Activated T-helper 1 cell treated with anti-CD3 and anti-CD28 coated beads, Interleukin-12 subunit alpha, Interleukin-12 subunit beta, Interleukin-2, Interleukin-4 antibody, amounts not matched to agents 30 ng/mL and 10 ng/mL and 1 ng/mL, durations not matched to agents 14 hours and 24 hours and 36 hours (primary cell): ENCODE measurements at regions of chrX and their contacts with region 1.

Region 1: GRCh38 chrX:47193475-47194193 is at the start of gene UBA1:
- DNase-seq: peak; percentile 87
- H3K4me3 Mint-ChIP-seq: peak within 1 kb of the TSS; percentile 96
- H3K27ac Mint-ChIP-seq: peak within 1 kb of the TSS; percentile 98
- H3K4me1 Mint-ChIP-seq: peaks cover 59% of the 10 kb centered on the region
- H3K27me3 Mint-ChIP-seq: no peaks in the 10 kb centered on the region
- total RNA-seq, gene UBA1: 221 and 223 TPM in 2 replicates

Region 2: DNA sequence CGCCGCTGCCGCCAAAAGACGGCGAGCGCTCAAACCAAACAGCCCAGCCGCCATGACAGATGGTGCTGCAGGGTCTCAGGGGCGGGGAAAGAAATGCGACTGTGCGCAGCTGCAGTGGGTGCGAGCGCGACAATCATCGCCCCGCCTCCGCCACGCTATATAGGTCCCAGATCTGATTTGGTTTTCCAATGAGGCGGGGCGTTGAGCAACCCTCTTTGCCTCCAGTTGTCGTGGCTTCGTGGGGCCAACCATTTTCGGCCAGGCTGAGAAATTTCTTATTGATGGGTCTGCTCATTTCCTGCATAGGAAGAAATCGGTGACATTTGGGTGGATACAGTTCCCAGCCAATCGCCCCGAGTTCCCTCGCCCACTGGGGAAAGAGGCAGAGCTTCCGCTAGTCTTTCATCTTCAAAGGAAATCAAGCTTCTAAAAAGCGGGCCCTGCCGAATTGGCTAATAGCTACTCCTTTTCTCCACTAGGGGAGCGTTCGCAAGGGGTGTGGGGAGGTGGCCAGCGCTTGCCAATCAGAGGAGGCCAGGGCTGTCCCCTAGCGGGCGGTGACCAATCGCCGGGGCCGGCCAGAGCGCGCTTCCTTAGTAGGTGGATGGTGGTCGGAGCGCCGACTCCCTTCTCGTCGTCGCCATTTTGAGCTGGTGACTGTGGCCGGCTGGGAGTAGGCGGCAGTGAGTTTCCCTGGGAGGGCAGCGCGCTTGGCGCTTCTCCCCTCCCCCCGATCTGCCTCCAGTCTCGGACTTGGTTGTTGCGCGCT is 48.8 kb before region 1 on chrX and contains the starts of genes NDUFB11 and RBM10:
- intact Hi-C with region 1: loop called (anchors 1 kb)
- DNase-seq: peak; percentile 89
- H3K4me3 Mint-ChIP-seq: peak within 1 kb of the TSS; percentile 100
- H3K27ac Mint-ChIP-seq: peak within 1 kb of the TSS; percentile 100
- H3K4me1 Mint-ChIP-seq: peaks cover 18% of the 10 kb centered on the region
- H3K27me3 Mint-ChIP-seq: peaks cover 2% of the 10 kb centered on the region
- total RNA-seq, gene NDUFB11: 84.5 and 88.7 TPM in 2 replicates
- total RNA-seq, gene RBM10: 62.0 and 64.1 TPM in 2 replicates

Region 3: DNA sequence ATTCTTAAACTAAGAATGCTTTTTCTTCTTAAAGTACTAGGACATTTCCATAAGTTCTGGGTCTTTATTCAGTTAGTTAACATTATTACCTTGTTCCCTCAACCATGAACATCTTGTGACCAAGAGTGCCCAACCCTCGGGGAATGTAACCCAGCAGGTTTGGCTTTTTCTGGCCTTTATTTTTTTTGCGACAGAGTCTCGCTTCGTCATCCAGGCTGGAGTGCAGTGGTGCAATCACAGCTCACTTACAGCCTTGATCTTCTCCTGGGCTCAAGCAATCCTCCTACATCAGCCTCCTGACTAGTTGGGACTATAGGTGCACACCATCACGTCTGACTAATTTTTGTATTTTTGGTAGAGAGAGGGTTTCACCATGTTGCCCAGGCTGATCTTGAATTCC is 104.2 kb after region 1 on chrX:
- intact Hi-C with region 1: no loop called
- DNase-seq: no peak
- H3K4me3 Mint-ChIP-seq: no peak overlapping the region
- H3K27ac Mint-ChIP-seq: no peak overlapping the region
- H3K4me1 Mint-ChIP-seq: no peaks in the 10 kb centered on the region
- H3K27me3 Mint-ChIP-seq: no peaks in the 10 kb centered on the region

Region 4: GRCh38 chrX:47311932-47312774 is 118.5 kb after region 1 on chrX:
- intact Hi-C with region 1: loop called (anchors 1 kb)
- DNase-seq: peak; percentile 1
- H3K4me3 Mint-ChIP-seq: no peak overlapping the region
- H3K27ac Mint-ChIP-seq: no peak overlapping the region
- H3K4me1 Mint-ChIP-seq: no peaks in the 10 kb centered on the region
- H3K27me3 Mint-ChIP-seq: no peaks in the 10 kb centered on the region

Region 5: GRCh38 chrX:47482512-47483309 is 289.1 kb after region 1 on chrX and contains the start of gene ZNF41:
- intact Hi-C with region 1: loop called (anchors 1 kb)
- DNase-seq: peak; percentile 63
- H3K4me3 Mint-ChIP-seq: peak within 1 kb of the TSS; percentile 92
- H3K27ac Mint-ChIP-seq: peak within 1 kb of the TSS; percentile 91
- H3K4me1 Mint-ChIP-seq: peaks cover 26% of the 10 kb centered on the region
- H3K27me3 Mint-ChIP-seq: no peaks in the 10 kb centered on the region
- total RNA-seq, gene ZNF41: 10.7 and 10.9 TPM in 2 replicates

Region 6: GRCh38 chrX:47650164-47651042 is 456.8 kb after region 1 on chrX and contains the start of gene ELK1:
- intact Hi-C with region 1: loop called (anchors 1 kb)
- DNase-seq: peak; percentile 85
- H3K4me3 Mint-ChIP-seq: peak within 1 kb of the TSS; percentile 95
- H3K27ac Mint-ChIP-seq: peak within 1 kb of the TSS; percentile 96
- H3K4me1 Mint-ChIP-seq: peaks cover 66% of the 10 kb centered on the region
- H3K27me3 Mint-ChIP-seq: no peaks in the 10 kb centered on the region
- total RNA-seq, gene ELK1: 99.3 TPM in 2 replicates

Region 7: GRCh38 chrX:48021026-48021900 is 827.6 kb after region 1 on chrX:
- intact Hi-C with region 1: loop called (anchors 10 kb)
- DNase-seq: peak; percentile 54
- H3K4me3 Mint-ChIP-seq: peak overlapping the region; percentile 92
- H3K27ac Mint-ChIP-seq: peak overlapping the region; percentile 97
- H3K4me1 Mint-ChIP-seq: peaks cover 6% of the 10 kb centered on the region
- H3K27me3 Mint-ChIP-seq: peaks cover 7% of the 10 kb centered on the region